GM23248 (cell line): ENCODE measurements at regions of chr3 and their contacts with region 1.

Region 1: GRCh38 chr3:101179637-101180036 is 140.7 kb downstream of the IMPG2 start:
- DNase-seq: peak; percentile 80
- H3K4me3 ChIP-seq: no peak overlapping the region
- H3K27ac ChIP-seq: peak overlapping the region; percentile 26; the same call in 1 of the 2 replicates
- H3K4me1 ChIP-seq: peaks cover 5% of the 10 kb centered on the region
- H3K27me3 ChIP-seq: no peaks in the 10 kb centered on the region

Region 2: GRCh38 chr3:100893590-100893989 is 286.0 kb before region 1 on chr3:
- in situ Hi-C with region 1: loop called (anchors 10 kb)
- DNase-seq: peak; percentile 68
- H3K4me3 ChIP-seq: no peak overlapping the region
- H3K27ac ChIP-seq: no peak overlapping the region
- H3K4me1 ChIP-seq: peaks cover 3% of the 10 kb centered on the region; the same call in 1 of the 2 replicates
- H3K27me3 ChIP-seq: no peaks in the 10 kb centered on the region